B cell (primary cell): ENCODE measurements at regions of chr17 and their contacts with region 1.

Region 1: DNA sequence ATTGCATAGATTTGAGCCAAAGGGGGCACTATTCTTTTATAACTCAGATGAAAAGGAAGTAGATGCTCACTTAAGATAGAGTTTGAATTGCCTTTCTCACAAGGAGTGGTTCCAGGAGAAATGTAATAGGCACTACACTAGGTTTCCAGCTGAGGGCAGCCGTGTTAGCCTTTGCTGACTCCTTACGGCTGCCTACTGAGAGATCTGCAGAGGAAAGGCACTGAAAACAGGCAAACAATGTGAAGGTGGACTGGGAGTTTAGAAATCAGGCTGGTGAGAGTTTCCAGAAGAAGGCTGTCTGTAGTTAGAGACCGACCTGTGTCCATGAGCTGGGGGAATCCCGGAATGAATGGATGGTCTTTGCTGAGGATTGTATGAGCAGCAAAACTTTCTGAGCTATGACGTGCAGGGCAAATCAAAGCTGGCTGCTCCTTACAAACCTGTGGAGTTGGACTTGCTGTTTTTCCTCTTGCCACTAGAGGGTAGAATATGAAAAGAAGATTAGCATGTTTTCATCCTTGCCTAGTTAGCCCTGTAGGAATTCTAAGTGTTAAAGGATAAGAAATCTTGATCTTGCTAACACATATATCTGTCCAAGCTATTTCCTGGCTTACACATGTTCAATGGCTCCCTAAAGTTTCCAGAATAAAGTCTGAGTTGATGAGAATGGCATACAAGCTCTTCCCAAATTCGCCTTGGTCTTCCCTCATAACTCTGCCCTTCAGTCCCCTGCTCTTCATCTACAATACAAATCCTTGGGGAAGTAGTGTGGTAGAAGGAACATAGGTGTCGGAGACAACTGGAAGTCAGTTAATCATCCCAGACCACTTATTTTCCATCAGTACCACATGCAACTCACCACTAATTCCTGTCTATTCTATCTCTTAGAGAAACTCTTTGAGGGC is 20.1 kb upstream of the TAOK1 start:
- DNase-seq: peak; percentile 82
- ATAC-seq: peak; percentile 94
- H3K4me3 ChIP-seq: peak overlapping the region in 2 of 5 experiments; percentile 20 to 25
- H3K4me3 Mint-ChIP-seq: no peak overlapping the region
- H3K27ac ChIP-seq: no peak overlapping the region
- H3K27ac Mint-ChIP-seq: no peak overlapping the region
- H3K4me1 ChIP-seq: peaks cover 0 to 7% of the 10 kb centered on the region in 2 donors
- H3K4me1 Mint-ChIP-seq: no peaks in the 10 kb centered on the region
- H3K27me3 ChIP-seq: no peaks in the 10 kb centered on the region
- H3K27me3 Mint-ChIP-seq: no peaks in the 10 kb centered on the region
- CTCF ChIP-seq: peak; percentile 86

Region 2: DNA sequence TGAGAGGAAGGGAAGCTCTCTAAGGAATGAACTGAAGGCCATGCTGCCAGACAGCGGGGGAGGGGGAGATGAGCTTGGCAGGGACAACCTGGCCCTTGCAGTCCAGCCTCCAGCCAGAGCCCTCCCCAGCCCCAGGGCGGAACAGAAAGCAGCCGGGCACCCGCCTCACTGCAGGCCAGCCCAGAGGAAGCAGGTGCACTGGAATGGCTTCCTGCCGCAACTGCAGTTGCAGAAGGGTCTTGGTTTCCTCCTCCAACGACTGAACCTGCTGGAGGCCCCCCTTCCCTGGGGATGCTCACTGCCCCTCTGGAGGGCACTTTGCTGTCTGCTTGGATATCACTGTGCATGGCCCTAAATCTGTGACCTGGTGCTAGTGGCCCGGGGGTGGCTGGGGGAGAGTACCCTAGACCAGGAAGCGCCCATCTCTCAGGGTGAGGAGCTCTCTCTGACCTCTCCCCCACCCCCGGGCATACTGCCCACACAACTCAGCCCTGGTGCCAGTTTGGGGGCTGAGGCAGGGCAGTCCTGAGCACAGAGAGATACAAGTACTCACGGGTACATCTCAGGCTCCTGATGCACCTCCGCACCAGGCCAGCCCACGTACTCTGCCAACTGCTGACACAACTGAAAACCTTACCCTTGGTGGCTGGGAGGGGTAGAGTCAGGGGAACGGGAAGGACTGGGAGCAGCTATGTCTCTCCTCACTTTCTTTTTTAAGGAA is 231.0 kb before region 1 on chr17:
- CTCF ChIA-PET with region 1: no interaction called
- POLR2A ChIA-PET with region 1: no interaction called
- intact Hi-C with region 1: no loop called
- DNase-seq: peak; percentile 59
- ATAC-seq: peak; percentile 28
- H3K4me3 ChIP-seq: peak overlapping the region; percentile 53 to 83 (median 75)
- H3K4me3 Mint-ChIP-seq: peak overlapping the region; percentile 91
- H3K27ac ChIP-seq: peak overlapping the region; percentile 42 to 81
- H3K27ac Mint-ChIP-seq: peak overlapping the region; percentile 98
- H3K4me1 ChIP-seq: peaks cover 39 to 56% of the 10 kb centered on the region in 2 donors
- H3K4me1 Mint-ChIP-seq: peaks cover 64% of the 10 kb centered on the region
- H3K27me3 ChIP-seq: no peaks in the 10 kb centered on the region
- H3K27me3 Mint-ChIP-seq: no peaks in the 10 kb centered on the region
- CTCF ChIP-seq: no peak

Region 3: DNA sequence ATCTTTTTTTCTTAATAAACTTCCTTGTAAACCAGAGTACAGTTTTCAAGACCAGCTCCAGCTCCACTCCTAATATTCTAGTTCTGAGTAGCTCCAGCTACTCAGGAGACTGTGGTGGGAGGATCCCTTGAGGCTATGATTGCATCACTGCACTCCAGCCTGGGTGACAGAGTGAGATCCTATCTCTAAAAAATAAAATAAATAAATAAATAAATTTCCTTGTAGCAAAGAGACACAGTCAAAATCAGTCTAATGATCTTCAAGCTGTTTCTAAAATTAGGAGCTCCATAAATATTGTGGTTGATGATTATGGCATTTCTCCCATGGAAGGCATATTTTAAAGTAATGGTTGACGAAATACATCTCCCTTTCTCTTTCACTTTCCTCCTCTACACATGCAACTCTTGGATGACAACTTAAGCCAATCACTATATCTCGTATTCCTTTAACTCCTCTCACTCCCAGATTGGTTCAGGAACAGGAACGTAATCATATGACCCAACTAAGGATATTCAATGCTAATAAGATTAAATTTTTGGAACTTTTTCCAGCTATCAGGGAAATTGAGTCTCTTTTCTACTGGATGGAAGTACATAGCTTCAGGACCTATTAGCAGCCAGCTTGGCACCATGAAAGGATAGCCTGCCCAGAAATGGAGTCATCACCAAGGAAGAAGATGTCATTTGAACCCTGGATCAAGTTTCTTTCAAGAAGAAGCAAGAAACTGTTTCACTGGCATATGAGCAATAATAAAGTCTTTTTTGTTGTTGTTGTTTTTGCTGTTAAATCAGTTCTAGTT is 22.1 kb before region 1 on chr17:
- CTCF ChIA-PET with region 1: interaction called, 10 read pairs
- POLR2A ChIA-PET with region 1: interaction called, 6 read pairs
- intact Hi-C with region 1: no loop called
- DNase-seq: no peak
- ATAC-seq: no peak
- H3K4me3 ChIP-seq: no peak overlapping the region
- H3K4me3 Mint-ChIP-seq: no peak overlapping the region
- H3K27ac ChIP-seq: no peak overlapping the region
- H3K27ac Mint-ChIP-seq: no peak overlapping the region
- H3K4me1 ChIP-seq: no peaks in the 10 kb centered on the region
- H3K4me1 Mint-ChIP-seq: no peaks in the 10 kb centered on the region
- H3K27me3 ChIP-seq: no peaks in the 10 kb centered on the region
- H3K27me3 Mint-ChIP-seq: peaks cover 6% of the 10 kb centered on the region
- CTCF ChIP-seq: no peak

Region 4: GRCh38 chr17:29384900-29385299 is 14.8 kb after region 1 on chr17:
- CTCF ChIA-PET with region 1: interaction called, 27 read pairs
- POLR2A ChIA-PET with region 1: no interaction called
- intact Hi-C with region 1: no loop called
- DNase-seq: no peak
- ATAC-seq: no peak
- H3K4me3 ChIP-seq: no peak overlapping the region
- H3K4me3 Mint-ChIP-seq: no peak overlapping the region
- H3K27ac ChIP-seq: no peak overlapping the region
- H3K27ac Mint-ChIP-seq: no peak overlapping the region
- H3K4me1 ChIP-seq: peaks cover 0 to 3% of the 10 kb centered on the region in 2 donors
- H3K4me1 Mint-ChIP-seq: peaks cover 4% of the 10 kb centered on the region
- H3K27me3 ChIP-seq: no peaks in the 10 kb centered on the region
- H3K27me3 Mint-ChIP-seq: no peaks in the 10 kb centered on the region
- CTCF ChIP-seq: no peak

Region 5: GRCh38 chr17:29495011-29495410 is 124.9 kb after region 1 on chr17:
- CTCF ChIA-PET with region 1: interaction called, 10 read pairs
- POLR2A ChIA-PET with region 1: no interaction called
- intact Hi-C with region 1: no loop called
- DNase-seq: no peak
- ATAC-seq: no peak
- H3K4me3 ChIP-seq: no peak overlapping the region
- H3K4me3 Mint-ChIP-seq: no peak overlapping the region
- H3K27ac ChIP-seq: no peak overlapping the region
- H3K27ac Mint-ChIP-seq: no peak overlapping the region
- H3K4me1 ChIP-seq: no peaks in the 10 kb centered on the region
- H3K4me1 Mint-ChIP-seq: no peaks in the 10 kb centered on the region
- H3K27me3 ChIP-seq: no peaks in the 10 kb centered on the region
- H3K27me3 Mint-ChIP-seq: no peaks in the 10 kb centered on the region
- CTCF ChIP-seq: no peak

Region 6: DNA sequence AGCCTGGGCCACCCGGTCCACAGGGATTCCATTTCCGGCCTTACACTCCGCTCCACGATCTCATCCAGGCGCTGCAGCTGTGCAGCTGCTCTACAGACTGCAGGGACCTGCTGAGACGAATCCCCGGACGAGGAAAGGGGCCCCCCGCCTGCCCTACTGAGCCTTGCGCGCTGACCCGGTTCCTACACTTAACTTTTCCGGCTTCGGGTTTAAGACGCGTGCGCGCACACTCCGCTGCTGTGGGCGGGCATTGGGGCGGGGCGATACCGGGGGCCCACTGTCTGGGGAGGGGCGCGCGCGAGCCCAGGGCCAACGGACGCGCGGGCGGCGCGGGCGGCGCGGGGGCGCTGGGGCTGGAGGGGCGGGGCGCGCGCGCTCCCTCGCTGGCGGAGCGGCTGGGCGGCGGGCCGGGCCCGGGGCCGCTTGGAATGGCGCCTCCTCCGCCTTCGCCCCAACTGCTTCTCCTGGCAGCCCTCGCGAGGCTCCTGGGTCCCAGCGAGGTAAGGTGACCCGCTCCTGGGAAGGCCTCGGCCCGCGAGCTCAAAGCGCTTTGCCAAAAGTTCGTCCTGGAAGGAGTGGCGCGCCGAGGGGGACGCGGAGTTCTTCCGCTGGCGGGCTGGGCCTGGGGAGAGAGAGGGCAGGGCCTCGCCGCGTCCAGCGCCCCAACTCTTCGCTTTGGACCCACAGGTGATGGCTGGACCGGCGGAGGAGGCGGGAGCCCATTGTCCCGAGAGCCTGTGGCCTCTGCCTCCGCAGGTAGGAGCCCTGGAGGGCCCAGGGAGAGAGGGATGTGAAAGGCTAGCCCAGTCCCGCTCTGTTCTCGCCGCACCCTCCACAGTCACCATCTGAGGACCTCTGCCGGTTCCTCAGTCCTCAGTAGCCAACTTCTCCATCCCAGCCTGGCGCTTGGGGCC is 198.5 kb after region 1 on chr17 and contains the start of gene TP53I13:
- CTCF ChIA-PET with region 1: interaction called, 43 read pairs
- POLR2A ChIA-PET with region 1: no interaction called
- intact Hi-C with region 1: loop called (anchors 1 kb)
- DNase-seq: peak; percentile 92
- ATAC-seq: peak; percentile 60
- H3K4me3 ChIP-seq: peak within 1 kb of the TSS; percentile 71 to 99 (median 80)
- H3K4me3 Mint-ChIP-seq: peak within 1 kb of the TSS; percentile 99
- H3K27ac ChIP-seq: peak within 1 kb of the TSS; percentile 71 to 76
- H3K27ac Mint-ChIP-seq: peak within 1 kb of the TSS; percentile 97
- H3K4me1 ChIP-seq: peaks cover 27 to 40% of the 10 kb centered on the region in 2 donors
- H3K4me1 Mint-ChIP-seq: peaks cover 39% of the 10 kb centered on the region
- H3K27me3 ChIP-seq: no peaks in the 10 kb centered on the region
- H3K27me3 Mint-ChIP-seq: no peaks in the 10 kb centered on the region
- CTCF ChIP-seq: no peak
- total RNA-seq, gene TP53I13: 220 and 224 TPM in 2 replicates

Region 7: GRCh38 chr17:29617125-29617480 is 247.0 kb after region 1 on chr17:
- CTCF ChIA-PET with region 1: interaction called, 23 read pairs
- POLR2A ChIA-PET with region 1: no interaction called
- intact Hi-C with region 1: no loop called
- DNase-seq: peak; percentile 90
- ATAC-seq: peak; percentile 71
- H3K4me3 ChIP-seq: peak overlapping the region in 4 of 5 experiments; percentile 37 to 73 (median 53)
- H3K4me3 Mint-ChIP-seq: peak overlapping the region; percentile 90
- H3K27ac ChIP-seq: no peak overlapping the region
- H3K27ac Mint-ChIP-seq: peak overlapping the region; percentile 64
- H3K4me1 ChIP-seq: peaks cover 56 to 61% of the 10 kb centered on the region in 2 donors
- H3K4me1 Mint-ChIP-seq: peaks cover 47% of the 10 kb centered on the region
- H3K27me3 ChIP-seq: peaks cover 0 to 40% (median 12%) of the 10 kb centered on the region in 4 experiments
- H3K27me3 Mint-ChIP-seq: peaks cover 5% of the 10 kb centered on the region
- CTCF ChIP-seq: peak; percentile 76